Ascending aorta (tissue), 2 donors: ENCODE measurements at regions of chr1 and their contacts with region 1.

Region 1: DNA sequence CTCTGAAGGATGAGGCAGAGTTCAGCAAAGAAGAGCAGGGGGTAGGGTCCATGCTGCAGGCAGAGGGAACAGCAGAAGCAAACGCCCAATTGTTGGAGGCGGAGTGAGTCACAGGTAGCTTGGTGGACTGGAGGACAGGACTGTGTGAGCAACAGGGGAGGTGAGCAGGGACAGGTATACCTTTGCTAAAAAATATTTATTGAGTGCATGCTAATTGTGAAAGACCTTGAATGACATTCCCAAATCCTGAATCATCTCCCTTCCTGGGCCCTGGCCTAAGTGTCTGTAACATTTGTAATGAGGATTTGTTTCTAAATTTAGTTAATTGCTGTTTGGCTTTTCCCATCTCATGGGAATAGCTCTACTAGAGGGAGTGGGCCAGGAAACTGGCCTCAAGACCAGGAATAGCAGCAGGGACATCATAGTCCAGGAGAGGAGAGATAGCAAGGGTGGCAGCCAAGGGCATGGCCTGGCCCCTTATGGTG is 123.7 kb downstream of the FOXD2 start:
- DNase-seq: no peak
- H3K4me3 ChIP-seq: no peak overlapping the region
- H3K27ac ChIP-seq: no peak overlapping the region
- H3K4me1 ChIP-seq: peaks cover 6 to 41% of the 10 kb centered on the region in 2 donors
- H3K27me3 ChIP-seq: no peaks in the 10 kb centered on the region
- CTCF ChIP-seq: no peak

Region 2: DNA sequence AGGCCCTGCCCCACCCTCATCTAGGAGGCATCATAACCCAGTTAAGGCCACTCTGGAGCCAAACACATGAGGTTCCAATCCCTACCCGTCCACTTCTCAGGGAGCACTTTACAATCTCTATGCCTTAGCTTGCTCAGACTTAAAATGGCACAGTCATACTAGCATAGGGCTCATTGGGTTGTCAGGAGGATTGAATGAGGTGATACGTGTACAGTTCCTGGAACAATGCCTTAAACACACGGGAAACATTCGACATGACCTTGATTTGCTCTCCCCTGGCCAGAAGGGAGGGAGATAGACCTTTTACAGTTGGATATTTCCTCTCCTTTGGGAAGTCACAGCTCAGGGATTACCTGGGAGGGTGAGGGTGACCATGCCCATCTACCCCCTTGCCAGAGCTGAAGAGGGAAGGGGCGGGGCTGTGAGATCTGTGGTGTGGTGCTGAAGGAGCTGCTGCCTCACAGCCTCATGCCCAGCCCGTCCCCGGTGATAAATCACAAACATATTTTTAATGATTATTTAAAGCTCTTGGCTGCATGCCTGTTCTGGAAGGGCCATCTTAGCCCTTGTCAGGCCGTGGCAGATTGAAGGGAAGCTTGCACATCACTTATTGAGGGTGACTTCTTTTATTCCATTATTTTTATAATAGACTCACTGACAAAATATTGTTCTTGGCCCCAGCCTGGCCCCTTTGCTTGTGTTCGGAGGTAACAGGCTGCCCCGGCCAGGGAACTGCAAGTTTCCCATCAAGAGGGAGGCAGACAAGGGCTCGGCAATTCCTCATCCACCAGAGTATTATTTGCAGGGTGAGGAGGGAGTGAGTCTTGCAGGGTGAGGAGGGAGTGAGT is 40.3 kb before region 1 on chr1:
- intact Hi-C with region 1: loop called (anchors 5 kb)
- DNase-seq: peak; percentile 67 to 92
- H3K4me3 ChIP-seq: no peak overlapping the region
- H3K27ac ChIP-seq: peak overlapping the region; percentile 83 to 90
- H3K4me1 ChIP-seq: peaks cover 4 to 26% of the 10 kb centered on the region in 2 donors
- H3K27me3 ChIP-seq: no peaks in the 10 kb centered on the region
- CTCF ChIP-seq: no peak

Region 3: DNA sequence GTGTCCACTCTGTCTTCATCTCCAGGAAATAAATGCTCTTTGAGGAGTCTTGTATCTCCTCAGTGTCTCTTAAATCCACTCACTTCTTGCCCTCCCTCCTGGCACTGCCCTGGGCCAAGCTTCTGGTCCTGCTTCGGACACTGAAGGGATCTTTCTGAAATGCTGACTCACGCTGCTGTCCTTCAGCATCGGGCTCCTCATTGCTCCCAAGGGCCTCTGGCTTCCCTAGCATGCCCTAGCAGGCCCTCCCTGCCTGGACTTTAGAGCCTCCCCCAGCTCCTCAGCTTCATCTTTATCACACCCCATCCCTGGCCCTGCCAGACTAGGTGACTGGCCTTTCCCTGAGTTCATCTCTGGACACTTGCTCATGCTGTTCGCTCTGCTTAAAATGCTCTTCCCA is 27.1 kb before region 1 on chr1:
- intact Hi-C with region 1: loop called (anchors 2 kb)
- DNase-seq: no peak
- H3K4me3 ChIP-seq: no peak overlapping the region
- H3K27ac ChIP-seq: peak overlapping the region; percentile 53 to 71
- H3K4me1 ChIP-seq: peaks cover 3 to 20% of the 10 kb centered on the region in 2 donors
- H3K27me3 ChIP-seq: no peaks in the 10 kb centered on the region
- CTCF ChIP-seq: no peak